Caco-2 (cell line): ENCODE measurements at regions of chr20 and their contacts with region 1.

Region 1: GRCh38 chr20:50987592-50988210 is 29.1 kb downstream of the MOCS3 start:
- DNase-seq: peak; percentile 91 to 96
- H3K4me3 ChIP-seq: no peak overlapping the region
- H3K4me3 Mint-ChIP-seq: no peak overlapping the region
- H3K27ac Mint-ChIP-seq: no peak overlapping the region
- H3K4me1 ChIP-seq: no peaks in the 10 kb centered on the region
- H3K4me1 Mint-ChIP-seq: peaks cover 14% of the 10 kb centered on the region
- H3K27me3 ChIP-seq: no peaks in the 10 kb centered on the region
- H3K27me3 Mint-ChIP-seq: peaks cover 9% of the 10 kb centered on the region
- CTCF ChIP-seq: peak; percentile 97 to 99

Region 2: DNA sequence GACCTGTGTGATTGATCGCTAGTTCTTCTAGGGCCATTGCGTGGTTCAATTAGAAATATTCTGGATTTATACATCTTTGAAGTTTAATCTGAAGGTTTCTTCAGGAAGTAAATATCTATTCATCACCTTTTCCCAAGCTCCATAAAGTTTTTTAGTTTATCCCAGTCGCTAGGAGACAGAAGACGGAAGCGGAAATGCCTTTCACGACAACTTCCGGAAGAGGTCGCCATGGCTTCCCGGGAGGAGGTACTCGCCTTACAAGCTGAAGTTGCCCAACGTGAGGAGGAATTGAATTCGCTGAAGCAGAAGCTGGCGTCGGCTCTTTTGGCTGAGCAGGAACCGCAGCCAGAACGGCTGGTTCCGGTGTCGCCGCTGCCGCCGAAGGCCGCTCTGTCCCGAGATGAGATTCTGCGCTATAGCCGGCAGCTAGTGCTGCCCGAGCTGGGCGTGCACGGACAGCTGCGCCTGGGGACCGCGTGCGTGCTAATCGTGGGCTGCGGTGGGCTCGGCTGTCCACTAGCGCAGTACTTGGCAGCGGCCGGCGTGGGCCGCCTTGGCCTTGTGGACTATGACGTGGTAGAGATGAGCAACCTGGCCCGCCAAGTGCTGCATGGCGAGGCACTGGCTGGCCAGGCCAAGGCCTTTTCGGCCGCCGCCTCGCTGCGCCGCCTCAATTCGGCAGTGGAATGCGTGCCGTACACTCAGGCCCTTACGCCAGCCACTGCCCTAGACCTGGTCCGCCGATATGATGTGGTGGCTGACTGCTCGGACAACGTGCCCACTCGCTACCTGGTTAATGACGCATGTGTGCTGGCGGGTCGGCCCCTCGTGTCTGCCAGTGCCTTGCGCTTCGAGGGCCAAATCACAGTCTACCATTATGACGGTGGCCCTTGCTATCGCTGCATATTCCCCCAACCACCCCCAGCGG is 28.8 kb before region 1 on chr20 and contains the start of gene MOCS3:
- CTCF ChIA-PET with region 1: interaction called, 14 read pairs
- POLR2A ChIA-PET with region 1: interaction called, 4 read pairs
- intact Hi-C with region 1: no loop called
- DNase-seq: peak; percentile 94 to 96
- H3K4me3 ChIP-seq: peak within 1 kb of the TSS; percentile 91
- H3K4me3 Mint-ChIP-seq: peak within 1 kb of the TSS; percentile 92
- H3K27ac Mint-ChIP-seq: peak within 1 kb of the TSS; percentile 97
- H3K4me1 ChIP-seq: peaks cover 16% of the 10 kb centered on the region
- H3K4me1 Mint-ChIP-seq: peaks cover 22% of the 10 kb centered on the region
- H3K27me3 ChIP-seq: no peaks in the 10 kb centered on the region
- H3K27me3 Mint-ChIP-seq: no peaks in the 10 kb centered on the region
- CTCF ChIP-seq: peak in 1 of 2 experiments; percentile 37
- total RNA-seq, gene MOCS3: 12.9 and 13.2 TPM in 2 replicates

Region 3: DNA sequence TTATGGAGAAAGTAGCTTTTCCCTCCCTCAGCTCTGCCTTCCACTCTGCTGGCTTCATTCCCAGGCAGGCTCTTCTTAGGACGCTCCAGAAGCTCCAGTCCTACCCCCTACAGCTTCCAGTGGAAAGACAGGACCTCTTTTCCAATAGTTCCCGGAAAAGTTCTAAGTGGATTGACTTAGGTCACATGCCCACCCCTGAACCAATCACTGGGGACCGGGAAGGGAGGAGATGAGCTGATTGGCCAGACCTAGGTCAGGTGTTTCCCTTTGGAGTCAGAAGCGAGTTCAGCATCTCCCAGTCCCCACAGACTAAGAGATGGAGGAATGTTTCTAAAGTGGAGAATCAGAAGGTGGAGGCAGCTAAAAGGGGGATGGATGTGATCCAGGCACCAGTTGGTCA is 98.1 kb after region 1 on chr20:
- CTCF ChIA-PET with region 1: interaction called, 12 read pairs
- POLR2A ChIA-PET with region 1: no interaction called
- intact Hi-C with region 1: no loop called
- DNase-seq: no peak
- H3K4me3 ChIP-seq: no peak overlapping the region
- H3K4me3 Mint-ChIP-seq: no peak overlapping the region
- H3K27ac Mint-ChIP-seq: no peak overlapping the region
- H3K4me1 ChIP-seq: peaks cover 11% of the 10 kb centered on the region; the same call in 1 of the 2 replicates
- H3K4me1 Mint-ChIP-seq: no peaks in the 10 kb centered on the region
- H3K27me3 ChIP-seq: peaks cover under 1% of the 10 kb centered on the region; the same call in 1 of the 2 replicates
- H3K27me3 Mint-ChIP-seq: peaks cover 16% of the 10 kb centered on the region
- CTCF ChIP-seq: no peak

Region 4: DNA sequence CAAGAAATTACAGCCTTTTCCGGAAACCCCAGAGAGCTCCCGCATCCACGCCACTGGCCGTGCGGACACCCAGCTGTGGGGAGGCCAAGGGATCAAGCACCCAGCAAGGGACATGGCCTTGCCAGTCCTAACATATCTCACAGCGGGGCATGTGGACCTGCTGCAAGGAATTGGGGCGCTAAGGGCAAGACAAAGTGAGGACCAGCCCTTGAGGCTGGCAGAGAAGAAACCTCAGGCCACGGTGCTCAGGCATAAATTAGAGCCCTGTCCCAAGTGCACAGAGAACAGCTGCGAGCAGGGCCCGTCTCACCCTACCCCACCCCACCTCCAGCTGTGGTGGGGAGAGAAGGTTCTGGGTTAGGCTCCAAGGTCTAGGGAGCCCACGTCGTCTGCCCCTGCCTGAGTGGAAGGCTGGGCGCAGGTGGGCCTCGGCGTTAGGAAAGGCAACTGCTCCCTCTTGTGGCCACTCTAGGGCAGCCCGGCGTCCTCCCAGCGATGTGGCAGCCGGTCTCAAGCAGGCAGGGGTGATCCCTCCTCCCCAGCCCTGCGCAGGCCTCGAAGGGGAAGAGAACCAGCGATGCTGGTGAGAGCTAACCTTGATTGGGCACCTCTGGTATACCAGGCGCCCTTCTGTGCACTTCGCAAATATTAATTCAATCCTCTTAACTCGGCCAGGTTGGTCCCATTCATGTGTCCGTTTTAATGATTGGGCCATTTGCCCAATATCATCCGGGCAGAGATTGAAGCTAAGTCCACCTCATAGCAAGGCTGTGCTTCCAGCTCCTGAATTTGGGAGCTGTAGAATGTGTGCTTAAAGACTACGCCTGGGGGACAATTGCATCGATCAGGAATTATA is 319.0 kb after region 1 on chr20:
- CTCF ChIA-PET with region 1: interaction called, 108 read pairs
- POLR2A ChIA-PET with region 1: interaction called, 3 read pairs
- intact Hi-C with region 1: loop called (anchors 1 kb)
- DNase-seq: peak; percentile 86 to 91
- H3K4me3 ChIP-seq: no peak overlapping the region
- H3K4me3 Mint-ChIP-seq: no peak overlapping the region
- H3K27ac Mint-ChIP-seq: no peak overlapping the region
- H3K4me1 ChIP-seq: peaks cover 30% of the 10 kb centered on the region
- H3K4me1 Mint-ChIP-seq: peaks cover 27% of the 10 kb centered on the region
- H3K27me3 ChIP-seq: no peaks in the 10 kb centered on the region
- H3K27me3 Mint-ChIP-seq: no peaks in the 10 kb centered on the region
- CTCF ChIP-seq: peak; percentile 99

Region 5: GRCh38 chr20:51326201-51326819 is 338.6 kb after region 1 on chr20:
- CTCF ChIA-PET with region 1: interaction called, 232 read pairs
- POLR2A ChIA-PET with region 1: no interaction called
- intact Hi-C with region 1: loop called (anchors 1 kb)
- DNase-seq: peak; percentile 77 to 79
- H3K4me3 ChIP-seq: no peak overlapping the region
- H3K4me3 Mint-ChIP-seq: no peak overlapping the region
- H3K27ac Mint-ChIP-seq: no peak overlapping the region
- H3K4me1 ChIP-seq: no peaks in the 10 kb centered on the region
- H3K4me1 Mint-ChIP-seq: no peaks in the 10 kb centered on the region
- H3K27me3 ChIP-seq: no peaks in the 10 kb centered on the region; the same call in 1 of the 2 replicates
- H3K27me3 Mint-ChIP-seq: peaks cover 19% of the 10 kb centered on the region
- CTCF ChIP-seq: peak; percentile 88 to 96

Region 6: DNA sequence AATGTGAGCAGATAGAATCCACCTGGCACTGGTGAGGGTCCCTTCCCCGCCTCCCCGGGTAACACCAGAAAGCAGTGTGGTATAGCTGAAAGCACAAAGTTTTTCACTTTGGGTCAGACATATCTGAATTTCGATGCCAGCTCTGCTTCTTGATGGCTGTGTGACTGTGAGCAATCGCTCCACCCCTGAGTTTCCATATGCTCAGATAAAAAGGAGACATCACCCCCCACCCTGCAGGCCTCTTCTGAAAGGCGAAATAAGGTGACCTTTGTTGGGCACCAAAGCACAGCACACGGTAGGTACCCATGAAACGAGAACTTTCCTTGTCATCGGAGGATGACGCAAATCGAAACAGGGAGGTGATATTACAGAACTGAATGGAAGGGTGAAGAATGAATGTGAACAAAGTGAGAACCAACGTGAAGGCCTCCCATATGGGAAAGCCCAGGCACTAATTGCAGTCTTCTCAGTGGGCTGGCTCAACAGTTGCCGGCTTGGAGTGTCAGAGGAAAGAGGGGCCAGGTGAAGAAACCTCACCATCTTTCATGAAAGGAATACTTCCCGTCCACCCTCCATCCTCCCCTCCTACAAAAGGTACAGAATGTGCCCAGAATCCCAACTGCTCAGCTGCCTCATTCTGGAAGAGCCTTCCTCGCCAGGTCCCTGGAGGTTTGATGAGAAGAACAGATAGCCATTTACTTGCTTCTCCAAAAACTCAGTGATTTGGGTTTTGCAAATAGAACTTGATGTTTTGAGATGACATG is 493.0 kb after region 1 on chr20:
- CTCF ChIA-PET with region 1: interaction called, 18 read pairs
- POLR2A ChIA-PET with region 1: no interaction called
- intact Hi-C with region 1: no loop called
- DNase-seq: no peak
- H3K4me3 ChIP-seq: no peak overlapping the region
- H3K4me3 Mint-ChIP-seq: no peak overlapping the region
- H3K27ac Mint-ChIP-seq: no peak overlapping the region
- H3K4me1 ChIP-seq: no peaks in the 10 kb centered on the region
- H3K4me1 Mint-ChIP-seq: no peaks in the 10 kb centered on the region
- H3K27me3 ChIP-seq: no peaks in the 10 kb centered on the region
- H3K27me3 Mint-ChIP-seq: no peaks in the 10 kb centered on the region
- CTCF ChIP-seq: no peak

Region 7: DNA sequence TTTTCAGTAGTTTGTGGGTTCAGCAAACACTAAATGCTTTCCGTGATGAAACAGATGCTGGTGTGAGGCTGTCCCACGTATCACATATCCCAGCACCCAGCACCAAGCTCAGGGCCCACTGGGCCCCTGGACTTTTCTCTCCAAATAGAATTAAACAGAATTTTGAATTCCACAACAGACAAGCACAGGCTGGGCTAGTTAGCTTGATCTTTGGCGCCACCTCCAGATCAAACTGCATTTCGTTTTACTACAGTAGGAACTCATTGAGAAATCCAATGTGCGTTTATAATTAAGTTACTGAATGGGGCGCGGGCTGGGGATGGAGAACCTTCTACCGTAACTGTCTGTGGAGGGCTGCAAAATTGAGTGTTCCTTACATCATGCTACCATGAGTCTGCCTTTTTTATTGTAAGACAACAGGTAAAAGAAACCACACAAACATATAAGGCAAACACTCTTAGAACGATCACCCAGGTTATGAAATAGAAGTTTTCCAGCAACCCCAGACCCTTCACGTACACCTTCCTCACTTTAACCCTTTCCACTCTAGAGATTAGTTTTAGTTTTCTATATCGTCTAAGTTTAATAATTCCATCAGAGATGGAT is 1096.0 kb after region 1 on chr20:
- CTCF ChIA-PET with region 1: interaction called, 6 read pairs
- POLR2A ChIA-PET with region 1: no interaction called
- intact Hi-C with region 1: loop called (anchors 5 kb)
- DNase-seq: peak; percentile 86 to 87
- H3K4me3 ChIP-seq: no peak overlapping the region
- H3K4me3 Mint-ChIP-seq: no peak overlapping the region
- H3K27ac Mint-ChIP-seq: peak overlapping the region; percentile 23
- H3K4me1 ChIP-seq: peaks cover 11% of the 10 kb centered on the region
- H3K4me1 Mint-ChIP-seq: peaks cover 28% of the 10 kb centered on the region
- H3K27me3 ChIP-seq: no peaks in the 10 kb centered on the region
- H3K27me3 Mint-ChIP-seq: no peaks in the 10 kb centered on the region
- CTCF ChIP-seq: peak; percentile 95 to 96